Mammary epithelial cell (primary cell): ENCODE measurements at regions of chr19 and their contacts with region 1.

Region 1: DNA sequence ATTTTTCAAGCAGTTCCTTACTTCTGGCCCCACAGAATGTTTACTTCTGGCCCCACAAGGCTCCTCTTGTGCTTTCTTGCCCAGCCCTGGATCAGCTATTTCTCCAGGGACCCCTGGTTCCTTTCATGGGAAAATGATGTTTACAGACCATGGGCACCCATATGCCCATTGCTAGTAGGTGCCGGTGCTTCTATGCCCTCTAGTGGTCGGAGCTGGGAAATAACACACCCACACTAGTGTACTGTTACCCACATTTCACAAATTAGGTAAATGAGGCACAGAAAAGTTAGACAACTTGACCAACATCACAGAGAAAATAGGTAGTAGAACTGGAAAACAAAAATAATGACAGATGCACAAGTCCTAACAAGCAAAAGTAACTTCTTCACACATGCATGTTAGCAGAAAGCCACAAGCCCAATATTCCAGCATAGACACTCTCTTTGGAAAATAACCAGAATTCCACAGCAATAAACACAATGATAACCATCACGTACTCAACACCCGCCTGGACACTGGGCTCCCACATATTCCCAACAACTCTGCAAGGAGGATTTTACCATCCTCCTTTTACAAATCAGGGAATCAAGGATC is 1.3 kb upstream of the CEACAM6 start:
- DNase-seq: peak; percentile 19
- H3K4me3 ChIP-seq: no peak overlapping the region
- H3K27ac ChIP-seq: no peak overlapping the region
- H3K4me1 ChIP-seq: no peaks in the 10 kb centered on the region
- H3K27me3 ChIP-seq: no peaks in the 10 kb centered on the region
- CTCF ChIP-seq: peak; percentile 78 to 79

Region 2: DNA sequence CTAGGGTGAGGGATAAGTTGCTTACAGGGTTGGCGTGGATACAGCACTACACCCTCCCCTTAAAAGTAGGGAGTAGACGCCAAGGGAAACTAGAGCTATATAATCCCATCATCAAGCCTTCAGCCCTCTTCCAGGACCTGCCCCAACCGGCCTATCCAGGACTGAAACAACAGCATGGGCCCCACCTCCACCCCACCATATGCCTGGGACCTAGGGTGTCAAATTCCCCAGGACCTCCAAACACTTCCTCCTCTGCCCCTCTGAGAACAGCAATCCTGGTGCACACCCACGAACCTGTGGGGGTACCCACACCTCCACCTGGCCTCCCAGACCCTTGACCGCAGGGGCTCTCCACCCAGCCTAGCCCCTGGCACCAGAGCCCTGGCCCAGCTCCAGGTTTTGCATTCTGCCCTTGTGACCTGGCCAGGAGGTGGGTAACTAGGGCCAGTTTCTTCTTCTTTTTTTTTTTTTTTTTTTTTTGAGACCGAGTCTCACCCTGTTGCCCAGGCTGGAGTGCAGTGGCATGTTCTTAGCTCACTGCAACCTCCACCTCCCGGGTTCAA is 641.2 kb before region 1 on chr19:
- CTCF ChIA-PET with region 1: interaction called, 14 read pairs
- dilution Hi-C with region 1: no loop called
- in situ Hi-C with region 1: no loop called
- intact Hi-C with region 1: no loop called
- DNase-seq: no peak
- H3K4me3 ChIP-seq: no peak overlapping the region
- H3K27ac ChIP-seq: no peak overlapping the region
- H3K4me1 ChIP-seq: no peaks in the 10 kb centered on the region
- H3K27me3 ChIP-seq: no peaks in the 10 kb centered on the region
- CTCF ChIP-seq: no peak

Region 3: GRCh38 chr19:41775360-41775695 is 21.3 kb after region 1 on chr19:
- CTCF ChIA-PET with region 1: interaction called, 13 read pairs
- dilution Hi-C with region 1: no loop called
- in situ Hi-C with region 1: loop called in 1 of 2 experiments (anchors 5 kb)
- intact Hi-C with region 1: no loop called
- DNase-seq: peak; percentile 78
- H3K4me3 ChIP-seq: no peak overlapping the region
- H3K27ac ChIP-seq: no peak overlapping the region
- H3K4me1 ChIP-seq: peaks cover 26% of the 10 kb centered on the region
- H3K27me3 ChIP-seq: peaks cover 4% of the 10 kb centered on the region
- CTCF ChIP-seq: no peak